ENCODE measurements at regions of chr3 and their contacts with region 1.

Region 1: GRCh38 chr3:156554842-156555687 is at the start of gene SSR3:
- DNase-seq: peak; percentile 100
- ATAC-seq: peak; percentile 100
- H3K4me3 ChIP-seq: peak within 1 kb of the TSS; percentile 43 to 61
- H3K27ac ChIP-seq: peak within 1 kb of the TSS in 1 of 2 donors; percentile 70
- H3K4me1 ChIP-seq: peaks cover 2 to 4% of the 10 kb centered on the region in 2 donors
- H3K27me3 ChIP-seq: no peaks in the 10 kb centered on the region
- total RNA-seq, gene SSR3: 120 to 135 TPM

Region 2: DNA sequence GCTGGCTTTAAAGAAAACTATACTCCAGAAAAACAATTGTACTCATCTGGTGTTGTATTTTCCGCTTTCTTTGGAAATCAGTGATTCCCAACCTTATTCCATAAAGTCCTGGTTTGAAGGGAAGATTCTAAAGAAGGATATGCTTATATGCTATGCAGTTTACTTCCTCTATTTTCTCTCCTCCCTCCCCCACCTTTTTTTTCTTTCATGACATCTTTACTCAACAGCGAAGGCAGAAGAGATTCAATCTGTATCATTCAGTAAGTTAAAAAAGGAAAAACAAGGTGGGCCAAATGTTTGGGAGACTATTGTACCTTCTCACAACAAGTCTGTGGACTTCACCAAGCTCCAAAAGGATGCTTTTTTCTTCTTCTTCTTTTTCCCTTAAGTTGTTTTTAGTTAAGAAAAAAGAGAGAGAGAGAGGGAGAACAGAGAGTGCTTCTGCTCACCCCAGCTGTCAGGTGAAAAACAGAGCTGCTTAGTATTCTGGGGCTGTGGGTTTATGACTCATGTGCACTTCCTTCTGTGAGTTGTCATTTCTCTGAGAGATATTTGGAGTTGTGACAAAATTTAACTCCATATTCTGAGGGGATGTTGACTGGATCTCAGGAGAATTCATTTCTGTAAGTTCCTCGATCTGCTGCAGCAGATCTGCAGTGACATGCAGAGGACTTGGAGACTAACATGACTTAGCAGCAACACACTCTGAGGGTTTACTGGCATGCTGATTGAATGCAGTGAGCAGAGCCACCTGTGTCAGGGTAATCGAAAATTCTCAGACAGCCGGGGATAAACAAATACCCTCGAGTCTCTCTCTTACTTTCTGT is 70.9 kb before region 1 on chr3:
- intact Hi-C with region 1: no loop called
- DNase-seq: no peak
- ATAC-seq: no peak
- H3K4me3 ChIP-seq: peak overlapping the region in 1 of 2 donors; percentile 10
- H3K27ac ChIP-seq: no peak overlapping the region
- H3K4me1 ChIP-seq: peaks cover 5 to 10% of the 10 kb centered on the region in 2 donors
- H3K27me3 ChIP-seq: no peaks in the 10 kb centered on the region

Region 3: DNA sequence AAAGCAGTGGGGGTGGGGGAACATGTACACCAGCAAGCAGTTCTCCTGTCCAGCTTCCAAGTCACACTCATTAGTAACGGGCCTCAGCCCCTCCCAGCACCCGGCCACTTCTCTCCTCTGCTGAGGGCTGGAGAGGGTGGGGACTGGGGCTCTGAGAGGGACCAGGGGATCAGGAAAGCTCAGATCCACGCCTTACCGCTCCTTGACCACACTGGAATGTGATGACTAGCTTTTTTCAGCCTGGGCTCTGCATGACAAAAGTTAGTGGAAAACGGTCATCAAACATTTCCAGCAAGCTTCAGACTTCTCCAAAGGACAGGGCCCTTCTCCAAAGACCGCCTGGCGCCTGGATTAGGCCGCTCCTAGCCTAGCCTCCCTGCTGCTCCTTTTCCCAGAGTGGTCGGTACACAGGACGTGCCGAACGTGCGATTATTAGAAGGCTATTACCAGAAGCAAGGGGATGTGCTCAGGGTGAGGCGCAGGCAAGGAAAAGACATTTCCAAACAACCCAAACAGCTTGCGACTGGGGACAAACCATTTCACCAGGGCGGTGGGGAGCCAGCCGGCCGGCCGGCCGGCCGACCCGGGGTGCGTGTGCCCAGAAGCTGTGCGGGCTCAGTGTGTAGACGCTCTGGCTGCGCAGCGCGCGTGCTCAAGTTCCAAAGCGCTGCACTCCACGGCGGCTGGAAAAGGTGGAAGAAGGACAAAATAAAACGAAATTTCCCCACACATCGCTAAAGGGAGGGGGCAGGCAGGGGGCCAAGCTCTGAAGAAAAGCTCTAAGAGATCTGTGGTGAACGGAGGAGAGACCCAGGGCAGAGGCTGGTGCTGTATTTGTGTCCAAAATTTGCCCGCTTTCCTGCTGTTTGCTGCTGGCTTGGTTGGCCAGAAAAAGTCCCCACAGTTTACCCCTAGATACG is 50.9 kb after region 1 on chr3:
- intact Hi-C with region 1: loop called in 1 of 2 experiments (anchors 5 kb)
- DNase-seq: peak; percentile 80 to 81
- ATAC-seq: peak; percentile 87
- H3K4me3 ChIP-seq: peak overlapping the region; percentile 27 to 63
- H3K27ac ChIP-seq: peak overlapping the region in 1 of 2 donors; percentile 88
- H3K4me1 ChIP-seq: no peaks in the 10 kb centered on the region
- H3K27me3 ChIP-seq: no peaks in the 10 kb centered on the region

Region 4: GRCh38 chr3:157088601-157089454 is 533.8 kb after region 1 on chr3:
- intact Hi-C with region 1: loop called (anchors 5 kb)
- DNase-seq: peak; percentile 98
- ATAC-seq: peak; percentile 96
- H3K4me3 ChIP-seq: peak overlapping the region; percentile 1 to 31
- H3K27ac ChIP-seq: peak overlapping the region; percentile 72 to 94
- H3K4me1 ChIP-seq: peaks cover 5 to 11% of the 10 kb centered on the region in 2 donors
- H3K27me3 ChIP-seq: no peaks in the 10 kb centered on the region

Measured in aorta (tissue), 5 donors.